ENCODE measurements at regions of chr13 and their contacts with region 1.

Region 1: DNA sequence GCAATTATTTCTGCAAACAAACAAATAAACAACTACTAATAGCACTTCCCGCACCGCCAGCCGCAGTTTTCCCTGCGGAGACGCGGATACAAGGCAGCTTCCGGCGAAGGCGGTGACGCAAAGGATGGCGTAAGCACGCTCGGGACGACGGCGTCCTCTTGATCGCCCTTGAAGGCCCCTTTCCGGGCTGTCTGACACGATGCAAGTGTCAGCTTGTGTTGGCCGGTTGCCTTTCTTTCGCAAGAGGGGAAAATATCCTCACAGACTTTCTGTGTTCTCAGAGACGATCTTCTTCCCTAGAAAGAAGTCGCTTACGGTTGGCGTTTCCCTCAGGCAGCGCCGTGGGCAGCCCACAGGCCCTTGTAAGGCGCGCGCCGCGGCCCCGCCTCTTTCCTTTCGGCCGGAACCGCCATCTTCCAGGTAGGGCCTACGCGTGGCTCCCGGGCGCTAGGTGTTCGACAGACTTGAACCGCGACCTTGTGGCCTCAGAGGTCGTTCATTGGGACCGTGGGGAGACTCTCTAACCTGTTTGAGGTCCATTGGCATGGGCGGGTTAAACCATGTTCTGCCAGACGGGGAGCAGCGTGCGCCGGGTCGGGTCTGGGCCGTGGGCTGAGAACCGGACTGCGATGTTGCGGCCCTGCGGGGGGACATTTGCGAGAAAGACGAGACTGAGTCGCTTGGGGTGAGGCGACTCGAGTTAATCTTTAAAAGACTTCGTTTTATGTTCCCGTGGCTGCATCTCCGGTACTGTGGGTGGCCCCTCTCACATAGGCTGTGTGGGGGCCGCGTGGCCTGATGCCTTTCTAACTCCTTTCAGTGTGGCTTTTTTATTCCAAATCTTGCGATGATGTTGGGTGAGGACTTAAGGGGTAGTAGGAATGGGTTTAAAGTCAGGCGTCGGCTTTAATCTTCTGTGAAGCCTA is at the start of gene RPL21:
- DNase-seq: peak; percentile 97 to 98
- ATAC-seq: peak; percentile 97 to 98 (median 98)
- H3K4me3 ChIP-seq: peak within 1 kb of the TSS; percentile 81
- H3K27ac ChIP-seq: peak within 1 kb of the TSS; percentile 98
- H3K4me1 ChIP-seq: peaks cover 33% of the 10 kb centered on the region
- H3K27me3 ChIP-seq: no peaks in the 10 kb centered on the region
- CTCF ChIP-seq: no peak
- total RNA-seq, gene RPL21: 440 to 808 (median 733) TPM

Region 2: DNA sequence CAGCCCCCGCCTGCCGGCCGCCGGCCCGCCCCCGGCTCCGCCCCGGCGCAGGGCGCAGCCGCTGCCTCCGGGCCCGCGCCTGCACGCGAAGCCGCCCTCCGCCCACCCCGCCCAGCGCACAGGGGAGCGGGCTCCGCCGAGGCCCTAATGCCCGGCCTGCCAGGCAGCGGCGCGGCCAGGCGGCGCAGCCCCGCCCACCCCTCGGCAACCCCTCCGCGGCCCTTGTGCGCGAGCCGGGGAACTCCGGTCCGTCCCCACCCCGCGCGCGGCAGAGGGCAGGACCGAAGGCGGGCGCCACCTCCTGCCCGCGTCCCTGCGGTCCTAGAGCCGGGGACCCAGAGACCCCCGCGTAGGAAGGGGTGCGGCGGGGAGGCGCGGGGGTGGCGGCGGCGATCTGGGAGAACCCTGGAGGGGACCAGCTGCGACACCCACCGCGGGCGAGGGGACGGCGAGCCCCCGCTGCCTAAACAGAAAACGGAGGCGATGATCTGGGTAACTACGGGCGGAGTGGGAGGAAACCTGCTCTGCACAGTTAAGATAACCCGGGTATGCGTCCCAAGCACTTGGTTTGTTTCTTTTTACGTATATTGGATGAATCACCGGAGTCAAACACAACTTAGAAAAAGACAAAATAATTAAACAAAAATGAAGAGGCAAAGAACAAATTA is 79.5 kb before region 1 on chr13:
- intact Hi-C with region 1: loop called (anchors 1 to 5 kb)
- DNase-seq: peak; percentile 95 to 97
- ATAC-seq: peak; percentile 96 to 98 (median 97)
- H3K4me3 ChIP-seq: peak overlapping the region; percentile 86
- H3K27ac ChIP-seq: peak overlapping the region; percentile 90
- H3K4me1 ChIP-seq: peaks cover 31% of the 10 kb centered on the region
- H3K27me3 ChIP-seq: no peaks in the 10 kb centered on the region
- CTCF ChIP-seq: peak; percentile 18

Region 3: GRCh38 chr13:27424246-27425157 is 173.1 kb after region 1 on chr13 and contains the start of gene GTF3A:
- intact Hi-C with region 1: loop called (anchors 5 to 10 kb)
- DNase-seq: peak; percentile 89 to 93
- ATAC-seq: peak; percentile 90 to 92 (median 92)
- H3K4me3 ChIP-seq: peak within 1 kb of the TSS; percentile 93
- H3K27ac ChIP-seq: peak within 1 kb of the TSS; percentile 100
- H3K4me1 ChIP-seq: peaks cover 27% of the 10 kb centered on the region
- H3K27me3 ChIP-seq: no peaks in the 10 kb centered on the region
- CTCF ChIP-seq: no peak
- total RNA-seq, gene GTF3A: 141 to 201 (median 159) TPM